Right cardiac atrium (tissue), 5 donors: ENCODE measurements at regions of chr3 and their contacts with region 1.

Region 1: GRCh38 chr3:45929042-45929679 is 14.1 kb upstream of the CXCR6 start:
- DNase-seq: peak in 1 of 3 donors; percentile 65
- ATAC-seq: peak in 1 of 2 donors; percentile 41
- H3K4me3 ChIP-seq: no peak overlapping the region
- H3K27ac ChIP-seq: no peak overlapping the region
- H3K4me1 ChIP-seq: no peaks in the 10 kb centered on the region
- H3K27me3 ChIP-seq: no peaks in the 10 kb centered on the region

Region 2: DNA sequence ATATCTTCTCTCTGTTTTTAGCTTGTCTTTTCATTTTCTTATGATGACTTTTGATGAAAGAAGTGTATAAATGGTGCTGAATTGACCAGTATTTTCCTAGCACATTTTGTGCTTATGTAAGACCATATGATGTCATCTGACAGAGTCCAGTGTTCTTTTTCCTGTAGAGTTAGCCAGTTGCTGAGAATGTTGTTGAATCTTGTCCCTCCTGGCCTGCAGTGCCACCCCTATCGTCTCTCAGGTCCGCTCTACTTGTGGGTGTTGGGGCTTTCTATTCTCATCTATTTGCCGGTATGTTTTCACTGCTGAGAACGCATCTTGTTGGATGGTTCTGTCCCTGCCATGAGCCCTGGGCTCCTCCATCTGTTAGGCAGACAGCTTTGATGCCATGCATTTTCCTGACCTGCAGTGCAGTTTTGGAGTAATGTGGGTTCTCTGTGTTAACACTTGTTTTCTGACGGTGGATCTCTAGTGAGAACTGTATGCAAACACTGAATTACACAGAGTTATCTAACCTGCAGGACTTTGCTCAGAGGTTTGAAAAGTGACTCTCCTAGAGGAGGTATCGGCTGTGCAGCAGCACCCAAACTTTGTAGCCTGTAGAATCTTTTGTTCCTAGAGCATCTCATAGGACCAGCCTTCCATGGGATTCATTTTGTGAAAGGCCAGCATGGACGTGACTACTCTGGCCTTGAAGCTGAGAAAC is 177.5 kb before region 1 on chr3:
- intact Hi-C with region 1: loop called in 1 of 4 experiments (anchors 10 kb)
- DNase-seq: no peak
- ATAC-seq: no peak
- H3K4me3 ChIP-seq: no peak overlapping the region
- H3K27ac ChIP-seq: no peak overlapping the region
- H3K4me1 ChIP-seq: no peaks in the 10 kb centered on the region
- H3K27me3 ChIP-seq: no peaks in the 10 kb centered on the region

Region 3: GRCh38 chr3:45776611-45777010 is 152.6 kb before region 1 on chr3:
- intact Hi-C with region 1: loop called in 1 of 4 experiments (anchors 10 kb)
- DNase-seq: no peak
- ATAC-seq: no peak
- H3K4me3 ChIP-seq: no peak overlapping the region
- H3K27ac ChIP-seq: no peak overlapping the region
- H3K4me1 ChIP-seq: no peaks in the 10 kb centered on the region
- H3K27me3 ChIP-seq: no peaks in the 10 kb centered on the region

Region 4: GRCh38 chr3:46029953-46030543 is 100.9 kb after region 1 on chr3:
- intact Hi-C with region 1: no loop called
- DNase-seq: no peak
- ATAC-seq: no peak
- H3K4me3 ChIP-seq: no peak overlapping the region
- H3K27ac ChIP-seq: no peak overlapping the region
- H3K4me1 ChIP-seq: no peaks in the 10 kb centered on the region
- H3K27me3 ChIP-seq: no peaks in the 10 kb centered on the region